Heart right ventricle (tissue), 16 donors: ENCODE measurements at regions of chrX and their contacts with region 1.

Region 1: DNA sequence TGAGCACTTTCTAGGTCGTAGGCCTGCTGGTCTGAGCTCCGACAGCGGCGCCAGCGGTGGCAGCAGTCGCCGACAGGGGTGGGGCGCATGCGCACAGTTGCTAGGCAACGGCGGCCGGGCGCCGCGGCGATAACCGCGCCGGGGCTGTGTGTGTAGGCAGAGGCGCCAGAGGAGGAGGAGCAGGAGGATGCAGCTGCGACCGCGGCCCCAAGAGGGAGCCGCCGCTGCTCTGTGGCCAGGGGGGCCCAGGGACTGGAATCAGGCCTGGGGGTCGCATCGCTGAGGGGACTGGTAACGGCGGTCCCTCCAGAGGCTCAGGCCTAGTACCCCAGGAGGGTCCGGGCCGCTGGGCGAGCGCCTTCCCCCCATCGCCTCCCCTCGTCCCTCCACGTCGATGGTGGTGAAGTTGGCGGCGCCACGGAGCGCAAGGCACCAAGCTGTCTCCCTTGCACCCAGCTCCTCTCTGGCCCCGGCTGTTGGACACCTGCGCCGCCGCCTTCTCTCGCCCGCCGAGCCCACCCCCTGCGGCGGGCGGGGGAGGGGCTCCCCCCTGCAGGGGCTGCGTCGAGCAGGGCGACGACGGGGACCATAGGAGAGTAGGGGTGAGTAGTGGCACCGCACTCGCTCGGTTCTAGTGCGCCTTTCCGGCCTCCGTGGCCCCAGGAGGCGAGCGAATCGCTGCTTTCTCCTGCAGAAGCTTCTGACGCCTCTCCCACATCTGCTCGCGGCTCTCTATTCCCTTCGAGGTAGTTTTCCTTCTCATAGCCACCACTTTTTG is 58.6 kb upstream of the ZC4H2 start:
- DNase-seq: peak; percentile 41 to 75
- ATAC-seq: peak; percentile 93 to 97 (median 95)
- H3K4me3 ChIP-seq: peak within 1 kb of the TSS; percentile 7 to 60 (median 54)
- H3K27ac ChIP-seq: peak within 1 kb of the TSS in 9 of 10 donors; percentile 22 to 69 (median 56)
- H3K4me1 ChIP-seq: peaks cover 0 to 5% (median 0%) of the 10 kb centered on the region in 9 donors
- H3K27me3 ChIP-seq: peaks cover 0 to 29% (median 0%) of the 10 kb centered on the region in 7 donors
- CTCF ChIP-seq: peak in 7 of 9 donors; percentile 24 to 52 (median 37)

Region 2: DNA sequence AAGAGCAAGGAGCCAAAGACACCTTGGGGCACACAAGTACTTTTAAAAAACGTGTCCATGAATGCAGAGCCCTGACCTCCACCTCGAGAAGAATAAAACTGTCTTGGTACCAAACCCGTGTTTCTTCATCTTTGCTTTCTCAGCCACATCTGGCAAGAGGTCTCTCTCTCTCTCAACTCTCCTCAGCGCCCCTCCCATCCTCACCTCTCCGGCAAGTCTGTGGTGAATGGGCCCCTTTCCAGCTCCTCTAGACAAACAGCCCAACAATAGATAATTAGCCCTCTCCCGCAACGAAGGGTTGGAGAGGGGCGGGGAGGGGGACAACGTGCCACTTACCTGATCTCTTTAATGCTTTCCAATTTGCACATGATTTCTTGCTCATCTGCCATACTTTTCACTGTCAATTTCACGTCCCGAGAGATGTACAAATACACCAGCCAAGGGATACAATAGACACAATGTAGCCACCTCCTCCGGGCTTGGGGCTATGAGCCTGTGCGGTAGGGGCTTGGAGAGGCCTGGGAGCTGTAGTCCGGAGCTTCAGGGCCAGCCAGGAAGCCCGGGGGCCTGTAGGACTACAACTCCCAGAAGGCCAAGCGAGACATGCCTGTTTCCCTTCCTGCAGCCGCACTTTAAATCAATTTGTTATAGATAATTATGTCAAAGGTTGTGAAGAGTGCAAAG is 58.7 kb before region 1 on chrX and contains the start of gene ZC4H2:
- intact Hi-C with region 1: loop called in 1 of 10 experiments (anchors 10 kb)
- DNase-seq: peak; percentile 57 to 72
- ATAC-seq: peak; percentile 97 to 100 (median 99)
- H3K4me3 ChIP-seq: peak within 1 kb of the TSS; percentile 46 to 69 (median 58)
- H3K27ac ChIP-seq: peak within 1 kb of the TSS in 4 of 10 donors; percentile 4 to 39 (median 29)
- H3K4me1 ChIP-seq: peaks cover 0 to 5% (median 0%) of the 10 kb centered on the region in 9 donors
- H3K27me3 ChIP-seq: peaks cover 0 to 22% (median 0%) of the 10 kb centered on the region in 7 donors
- CTCF ChIP-seq: no peak
- total RNA-seq, gene ZC4H2: 1.3 to 7.4 (median 4.2) TPM